Naive thymus-derived CD4-positive, alpha-beta T cell (primary cell): ENCODE measurements at regions of chr3 and their contacts with region 1.

Region 1: DNA sequence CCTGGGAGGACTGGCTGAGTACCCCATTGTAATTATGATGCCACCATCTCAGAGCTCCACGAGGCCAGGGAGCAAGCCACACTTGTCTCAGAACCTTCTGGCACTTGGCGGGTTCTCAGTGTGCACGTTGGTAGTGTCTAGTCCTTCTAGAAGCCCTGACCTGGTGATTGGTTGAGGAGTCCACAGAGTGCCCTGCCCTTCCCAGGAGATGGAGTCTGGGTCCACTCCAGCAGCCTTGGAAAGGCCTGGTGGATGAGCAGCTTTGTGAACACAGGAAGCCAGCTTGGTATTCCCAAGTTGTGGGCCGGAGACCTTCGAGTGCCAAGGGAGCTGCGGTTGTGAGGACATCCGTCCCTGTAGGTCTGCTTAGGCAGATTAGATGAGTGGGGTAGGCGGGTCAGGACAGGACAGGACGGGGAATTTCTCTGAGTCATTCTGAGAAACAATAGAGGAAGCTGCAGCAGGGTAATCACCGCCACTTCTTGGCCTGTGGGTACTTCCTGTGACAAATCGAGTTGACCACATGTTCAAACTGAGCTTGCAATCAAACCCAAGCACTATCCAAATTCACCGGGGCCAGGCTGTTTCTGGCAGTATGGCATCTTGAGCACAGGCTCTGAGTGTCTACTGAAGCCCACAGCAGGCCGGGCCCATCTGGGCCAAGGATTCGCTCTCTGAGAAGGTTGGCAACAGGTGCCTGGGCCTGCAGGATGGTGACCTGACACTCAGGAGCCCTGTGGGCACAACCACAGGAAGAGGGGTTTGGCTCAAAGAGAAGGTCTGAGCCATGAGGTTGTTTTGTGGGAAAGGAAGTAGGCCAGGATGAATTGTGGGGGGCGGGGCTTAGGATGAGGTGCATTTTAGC is 71.5 kb upstream of the PLXNA1 start:
- DNase-seq: peak in 4 of 9 donors; percentile 2 to 61 (median 12)
- ATAC-seq: peak; percentile 93
- H3K4me3 ChIP-seq: peak overlapping the region; percentile 16
- H3K4me3 Mint-ChIP-seq: peak overlapping the region in 6 of 10 donors; percentile 11 to 84 (median 28)
- H3K27ac ChIP-seq: no peak overlapping the region
- H3K27ac Mint-ChIP-seq: peak overlapping the region; percentile 42 to 94 (median 69)
- H3K4me1 ChIP-seq: peaks cover 15 to 22% of the 10 kb centered on the region in 2 donors
- H3K4me1 Mint-ChIP-seq: peaks cover 23 to 58% (median 36%) of the 10 kb centered on the region in 7 donors
- H3K27me3 ChIP-seq: no peaks in the 10 kb centered on the region
- H3K27me3 Mint-ChIP-seq: peaks cover 0 to 5% (median 0%) of the 10 kb centered on the region in 5 donors

Region 2: GRCh38 chr3:127299276-127299675 is 387.9 kb after region 1 on chr3:
- CTCF ChIA-PET with region 1: no interaction called
- POLR2A ChIA-PET with region 1: no interaction called
- intact Hi-C with region 1: loop called in 1 of 2 experiments (anchors 10 kb)
- DNase-seq: no peak
- ATAC-seq: peak; percentile 94
- H3K4me3 ChIP-seq: no peak overlapping the region
- H3K4me3 Mint-ChIP-seq: no peak overlapping the region
- H3K27ac ChIP-seq: no peak overlapping the region
- H3K27ac Mint-ChIP-seq: no peak overlapping the region
- H3K4me1 ChIP-seq: no peaks in the 10 kb centered on the region
- H3K4me1 Mint-ChIP-seq: no peaks in the 10 kb centered on the region
- H3K27me3 ChIP-seq: no peaks in the 10 kb centered on the region
- H3K27me3 Mint-ChIP-seq: peaks cover 6 to 24% (median 22%) of the 10 kb centered on the region in 5 donors